Right ventricle myocardium inferior (tissue), 1 donor: ENCODE measurements at regions of chr2 and their contacts with region 1.

Region 1: GRCh38 chr2:174248187-174248997 is at the start of gene OLA1:
- DNase-seq: peak; percentile 98
- ATAC-seq: peak; percentile 100
- total RNA-seq, gene OLA1: 75.5 TPM

Region 2: DNA sequence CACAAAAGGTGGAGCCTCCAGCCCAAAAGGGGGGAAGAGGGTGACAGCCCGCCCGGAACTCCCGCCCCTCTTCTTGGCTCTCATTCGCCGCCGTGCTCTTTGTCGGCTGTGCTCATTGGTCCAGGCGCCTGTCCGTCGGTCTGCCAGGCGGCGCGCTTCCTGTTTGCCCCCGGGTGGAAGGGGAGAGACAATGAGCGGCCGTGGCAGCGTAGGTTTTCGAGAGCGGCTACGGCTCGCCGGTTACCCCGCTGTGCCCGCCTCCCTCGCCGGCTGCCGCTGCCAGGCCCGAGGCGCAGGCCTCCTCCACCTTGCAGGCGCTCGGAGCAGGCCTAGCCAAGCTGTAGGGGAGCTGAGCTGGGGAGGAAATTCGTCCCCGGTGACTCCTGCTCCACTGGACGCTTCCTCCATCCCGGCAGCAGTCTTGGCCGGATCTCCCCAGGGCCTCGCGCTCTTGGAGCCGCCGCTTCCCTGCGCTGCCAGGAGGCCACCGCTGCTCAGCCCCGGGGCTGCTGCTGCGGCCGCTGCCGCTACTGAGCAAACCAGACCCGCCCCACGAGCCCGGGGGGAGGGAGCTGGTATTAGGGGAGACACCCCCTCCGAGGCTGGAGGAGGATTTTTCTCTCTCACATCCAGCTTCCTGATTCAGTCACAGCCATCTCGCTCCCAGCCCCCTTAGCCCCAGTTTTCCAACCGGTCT is 282.9 kb before region 1 on chr2 and contains the start of gene SP3:
- intact Hi-C with region 1: loop called (anchors 2 kb)
- DNase-seq: peak; percentile 98
- ATAC-seq: peak; percentile 90
- total RNA-seq, gene SP3: 41.2 TPM

Region 3: DNA sequence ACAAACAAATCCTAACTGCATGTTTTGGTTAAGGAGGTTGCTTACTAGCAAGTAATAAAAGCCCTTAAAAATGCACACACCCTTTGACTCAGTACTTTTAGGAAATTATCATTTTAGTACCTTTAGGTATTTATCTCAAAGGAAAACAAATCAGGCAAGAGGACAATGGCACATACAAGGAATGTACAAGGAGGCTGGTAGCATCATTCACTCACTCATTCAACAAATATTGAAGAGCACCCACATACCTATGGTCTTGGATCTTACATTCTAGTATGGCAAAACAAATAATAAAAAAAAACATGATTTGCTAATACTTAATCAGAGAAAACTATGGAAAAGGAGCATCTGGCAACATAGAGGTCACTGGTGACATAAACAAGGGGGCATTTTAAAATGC is 67.6 kb before region 1 on chr2:
- intact Hi-C with region 1: no loop called
- DNase-seq: no peak
- ATAC-seq: no peak